GM23248 (cell line): ENCODE measurements at regions of chr1 and their contacts with region 1.

Region 1: DNA sequence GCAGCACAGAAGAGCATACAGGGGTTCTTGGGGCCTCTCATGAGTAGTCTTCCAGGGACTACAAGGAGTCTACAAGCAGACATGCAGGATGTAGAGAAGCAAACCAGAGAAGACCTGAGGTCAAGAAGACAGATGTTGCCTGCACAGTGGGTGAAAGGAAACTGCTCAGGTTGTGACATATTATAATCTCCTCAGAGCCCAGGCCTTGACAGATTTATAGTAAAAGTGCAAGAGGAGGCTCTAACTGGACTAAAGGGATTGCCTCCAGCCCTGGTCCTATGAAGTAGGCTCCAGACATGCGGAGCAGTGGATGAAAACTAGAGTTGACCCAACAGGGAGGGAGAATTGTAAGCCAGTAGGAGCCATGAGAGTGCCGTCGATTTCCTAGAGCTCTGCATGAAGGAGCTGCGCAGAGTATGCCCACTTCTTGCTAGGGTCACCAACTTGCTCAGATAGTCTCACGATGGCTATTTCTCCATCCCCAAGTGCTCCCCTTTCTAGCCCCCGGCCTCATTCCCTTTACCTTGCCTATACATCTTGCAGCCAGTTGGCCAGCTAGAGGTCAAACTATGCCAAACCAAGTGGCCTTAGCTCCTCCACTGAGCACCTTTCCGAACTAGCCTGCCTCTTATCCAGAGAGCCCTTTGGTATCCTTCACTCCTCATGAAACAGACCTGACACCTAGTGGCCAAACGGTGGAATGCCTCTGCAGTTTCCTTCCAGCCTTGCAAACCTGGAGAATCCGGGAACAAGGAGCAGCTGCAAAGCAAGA is 36.2 kb upstream of the IPO9 start:
- DNase-seq: peak; percentile 90
- H3K4me3 ChIP-seq: no peak overlapping the region
- H3K27ac ChIP-seq: peak overlapping the region; percentile 87
- H3K4me1 ChIP-seq: peaks cover 43% of the 10 kb centered on the region
- H3K27me3 ChIP-seq: no peaks in the 10 kb centered on the region

Region 2: GRCh38 chr1:201495471-201496295 is 297.0 kb before region 1 on chr1:
- in situ Hi-C with region 1: no loop called
- DNase-seq: peak; percentile 58
- H3K4me3 ChIP-seq: peak overlapping the region; percentile 16
- H3K27ac ChIP-seq: peak overlapping the region; percentile 58
- H3K4me1 ChIP-seq: peaks cover 50% of the 10 kb centered on the region
- H3K27me3 ChIP-seq: no peaks in the 10 kb centered on the region

Region 3: DNA sequence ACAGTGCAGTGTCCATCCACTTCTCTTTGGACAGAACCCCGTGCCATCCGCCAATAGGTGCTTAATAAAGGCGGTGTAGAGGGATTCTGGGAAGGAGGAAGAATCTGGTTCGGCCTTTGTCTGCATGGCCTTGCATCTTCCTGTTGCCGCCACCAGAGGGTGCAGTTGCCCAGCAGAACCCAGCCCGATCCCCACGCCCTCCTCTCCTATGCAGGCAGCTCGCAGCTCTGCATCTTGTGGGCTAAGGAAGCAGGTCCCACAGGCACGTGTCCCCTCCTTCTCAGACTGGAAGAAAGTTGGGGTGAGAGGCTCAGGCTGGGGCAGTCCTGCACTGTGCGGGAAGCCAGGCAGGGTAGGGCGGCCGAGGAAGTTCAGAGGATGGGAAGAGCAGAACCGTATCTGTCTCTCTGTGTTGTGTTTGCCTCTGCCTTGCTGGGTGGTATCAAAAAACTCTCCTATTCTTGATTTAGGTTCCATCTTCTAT is 233.0 kb before region 1 on chr1:
- in situ Hi-C with region 1: loop called (anchors 10 kb)
- DNase-seq: peak; percentile 91
- H3K4me3 ChIP-seq: no peak overlapping the region
- H3K27ac ChIP-seq: peak overlapping the region; percentile 97
- H3K4me1 ChIP-seq: peaks cover 70% of the 10 kb centered on the region
- H3K27me3 ChIP-seq: no peaks in the 10 kb centered on the region

Region 4: GRCh38 chr1:201709564-201710295 is 83.0 kb before region 1 on chr1:
- in situ Hi-C with region 1: loop called (anchors 5 kb)
- DNase-seq: peak; percentile 85
- H3K4me3 ChIP-seq: no peak overlapping the region
- H3K27ac ChIP-seq: peak overlapping the region; percentile 99
- H3K4me1 ChIP-seq: peaks cover 76% of the 10 kb centered on the region
- H3K27me3 ChIP-seq: no peaks in the 10 kb centered on the region

Region 5: DNA sequence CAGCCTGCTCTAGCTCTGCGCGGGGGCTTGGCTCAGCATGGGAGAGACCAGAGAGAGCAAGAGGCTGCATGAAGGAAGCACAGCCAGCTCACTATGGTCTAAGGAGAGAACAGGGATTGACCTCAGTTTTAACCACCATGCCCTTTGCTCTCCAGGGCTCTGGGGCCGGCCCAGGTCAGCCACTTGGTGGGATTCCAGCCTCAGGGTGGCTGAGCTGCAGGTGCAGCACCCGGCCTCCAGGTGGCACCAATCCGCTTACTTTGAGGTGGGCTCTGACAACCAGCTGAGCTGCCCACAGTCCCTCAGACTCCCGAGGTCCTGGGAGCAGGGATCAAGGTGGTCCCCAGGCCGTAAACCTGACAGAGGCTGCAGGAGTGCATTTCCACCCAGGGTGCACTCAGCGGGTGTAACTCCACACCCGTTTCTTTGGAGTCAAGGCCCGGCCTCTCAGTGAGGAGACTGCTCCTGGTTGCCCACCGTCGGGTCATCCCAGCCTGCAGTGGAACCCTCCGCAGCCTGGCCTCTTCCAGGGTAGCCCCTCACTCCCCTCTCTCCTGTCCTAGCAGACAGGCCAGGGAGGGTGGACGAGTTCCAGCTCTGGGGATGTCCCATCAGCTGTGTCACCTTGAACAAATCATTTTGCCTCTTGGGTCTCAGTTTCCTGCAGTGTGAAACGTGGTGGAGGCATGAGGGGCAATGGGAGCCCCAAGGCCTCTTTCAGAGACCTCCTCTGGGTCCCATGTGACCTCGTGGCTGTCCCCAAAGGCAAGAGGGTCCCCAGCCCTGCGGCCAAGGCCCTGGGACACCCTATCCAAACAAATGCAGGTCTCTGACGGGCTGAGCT is 400.3 kb after region 1 on chr1:
- in situ Hi-C with region 1: no loop called
- DNase-seq: peak; percentile 67
- H3K4me3 ChIP-seq: no peak overlapping the region
- H3K27ac ChIP-seq: no peak overlapping the region
- H3K4me1 ChIP-seq: no peaks in the 10 kb centered on the region
- H3K27me3 ChIP-seq: peaks cover 42% of the 10 kb centered on the region